ENCODE measurements at regions of chr15 and their contacts with region 1.

Region 1: DNA sequence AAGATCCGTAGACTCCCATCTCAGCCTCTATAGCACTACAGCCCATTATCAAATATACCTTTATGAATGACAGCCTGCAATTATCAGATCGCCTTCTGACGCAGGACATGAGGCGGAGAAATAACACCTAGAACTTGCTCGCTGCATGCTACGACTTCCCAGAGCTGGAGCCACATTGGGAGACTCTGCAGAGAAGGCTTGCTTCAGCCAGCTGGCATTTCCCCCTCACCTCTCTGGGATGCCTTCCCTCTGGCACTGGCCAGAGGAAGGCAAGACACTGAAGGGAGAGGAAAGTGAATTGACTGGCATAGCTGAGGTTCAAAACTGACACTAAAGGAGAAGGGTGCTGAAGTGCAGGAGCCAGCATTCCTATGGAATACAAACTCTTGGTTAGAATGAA is 131.7 kb downstream of the GABRB3 start:
- DNase-seq: no peak
- H3K4me3 ChIP-seq: no peak overlapping the region
- CTCF ChIP-seq: no peak
- POLR2A ChIP-seq: no peak

Region 2: GRCh38 chr15:25441111-25441510 is 1200.0 kb before region 1 on chr15:
- intact Hi-C with region 1: loop called (anchors 5 kb)
- DNase-seq: no peak
- H3K4me3 ChIP-seq: no peak overlapping the region
- CTCF ChIP-seq: no peak
- POLR2A ChIP-seq: no peak

Region 3: GRCh38 chr15:26537663-26538062 is 103.5 kb before region 1 on chr15:
- intact Hi-C with region 1: no loop called
- DNase-seq: no peak
- H3K4me3 ChIP-seq: no peak overlapping the region
- CTCF ChIP-seq: no peak
- POLR2A ChIP-seq: no peak

Region 4: DNA sequence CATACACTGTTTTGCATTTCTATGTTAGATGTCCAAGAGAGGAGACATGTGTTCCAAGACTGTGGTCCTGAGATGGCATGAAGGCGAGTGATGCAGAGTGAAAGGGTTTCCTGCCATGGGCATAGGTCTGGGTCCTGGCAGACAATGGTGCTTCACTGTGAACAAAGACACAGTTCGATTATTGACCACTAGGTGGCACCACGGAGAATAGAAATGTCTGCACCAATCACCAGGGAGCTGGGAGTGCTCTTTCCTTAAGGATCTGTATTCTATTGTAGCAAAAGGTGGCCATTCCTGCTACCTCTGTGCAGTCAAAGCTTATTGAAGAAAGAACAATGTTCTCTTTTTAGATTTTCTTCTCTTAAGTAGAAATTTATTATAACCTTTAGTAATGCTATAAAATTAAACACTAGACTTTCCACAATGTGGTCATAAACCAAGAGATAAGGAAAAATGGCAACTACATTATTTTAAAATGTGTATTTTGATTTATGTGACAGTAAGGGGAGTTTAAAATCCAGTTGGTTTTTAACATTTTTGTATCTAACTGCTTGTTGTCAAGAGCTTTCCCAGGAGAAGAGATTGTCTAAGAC is 418.6 kb after region 1 on chr15:
- intact Hi-C with region 1: no loop called
- DNase-seq: peak in 1 of 2 donors; percentile 22
- H3K4me3 ChIP-seq: no peak overlapping the region
- CTCF ChIP-seq: no peak
- POLR2A ChIP-seq: no peak